Activated CD4-positive, alpha-beta memory T cell treated with anti-CD3 and anti-CD28 coated beads, Interleukin-2, amount 10 ng/mL, durations not matched to agents 7 days and 5 days (primary cell): ENCODE measurements at regions of chr6 and their contacts with region 1.

Region 1: DNA sequence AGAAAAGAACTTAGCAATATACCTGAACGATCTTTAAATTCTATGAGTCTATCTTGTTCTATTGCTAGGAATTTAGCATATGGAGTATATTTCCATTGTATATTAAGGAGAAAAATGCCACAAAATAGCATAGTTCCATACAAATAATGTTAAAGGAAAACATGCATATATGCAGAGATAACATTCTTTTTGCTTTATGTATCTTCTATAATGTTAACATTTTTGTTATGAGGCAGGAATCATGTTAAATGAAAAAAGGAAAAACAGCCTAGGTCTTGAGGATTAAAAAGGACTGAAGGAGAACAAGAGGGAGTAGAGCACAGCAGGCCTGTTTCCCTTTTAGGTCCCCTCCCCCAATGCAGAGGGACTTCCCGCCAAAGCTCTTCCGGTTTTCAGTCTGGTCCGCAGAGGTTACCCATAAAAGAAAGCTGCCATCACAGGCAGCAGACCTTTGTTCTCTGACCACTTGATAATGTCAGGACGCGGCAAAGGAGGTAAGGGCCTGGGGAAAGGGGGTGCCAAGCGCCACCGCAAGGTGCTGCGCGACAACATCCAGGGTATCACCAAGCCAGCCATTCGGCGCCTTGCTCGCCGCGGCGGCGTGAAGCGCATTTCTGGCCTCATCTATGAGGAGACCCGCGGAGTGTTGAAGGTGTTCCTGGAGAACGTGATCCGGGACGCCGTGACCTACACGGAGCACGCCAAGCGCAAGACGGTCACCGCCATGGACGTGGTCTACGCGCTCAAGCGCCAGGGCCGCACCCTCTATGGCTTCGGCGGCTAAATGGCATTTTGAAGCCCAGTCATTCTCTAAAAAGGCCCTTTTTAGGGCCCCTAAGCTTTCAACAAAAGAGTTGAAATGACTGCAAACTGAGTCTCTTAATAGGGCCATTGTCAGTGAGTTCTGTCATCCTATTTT is 108.4 kb upstream of the PRSS16 start:
- DNase-seq: peak; percentile 80
- H3K4me3 Mint-ChIP-seq: peak overlapping the region; percentile 91
- H3K27ac Mint-ChIP-seq: peak overlapping the region; percentile 98
- H3K4me1 Mint-ChIP-seq: peaks cover 67% of the 10 kb centered on the region
- H3K27me3 Mint-ChIP-seq: no peaks in the 10 kb centered on the region

Region 2: GRCh38 chr6:27076116-27076515 is 63.0 kb before region 1 on chr6:
- CTCF ChIA-PET with region 1: no interaction called
- POLR2A ChIA-PET with region 1: no interaction called
- DNase-seq: no peak
- H3K4me3 Mint-ChIP-seq: no peak overlapping the region
- H3K27ac Mint-ChIP-seq: no peak overlapping the region
- H3K4me1 Mint-ChIP-seq: peaks cover 2% of the 10 kb centered on the region
- H3K27me3 Mint-ChIP-seq: peaks cover 21% of the 10 kb centered on the region

Region 3: GRCh38 chr6:27260369-27260768 is 121.3 kb after region 1 on chr6:
- CTCF ChIA-PET with region 1: no interaction called
- POLR2A ChIA-PET with region 1: no interaction called
- DNase-seq: no peak
- H3K4me3 Mint-ChIP-seq: no peak overlapping the region
- H3K27ac Mint-ChIP-seq: no peak overlapping the region
- H3K4me1 Mint-ChIP-seq: no peaks in the 10 kb centered on the region
- H3K27me3 Mint-ChIP-seq: peaks cover 29% of the 10 kb centered on the region

Region 4: GRCh38 chr6:27825025-27825793 is 686.1 kb after region 1 on chr6:
- CTCF ChIA-PET with region 1: no interaction called
- POLR2A ChIA-PET with region 1: interaction called, 70 read pairs
- DNase-seq: no peak
- H3K4me3 Mint-ChIP-seq: peak overlapping the region; percentile 82
- H3K27ac Mint-ChIP-seq: peak overlapping the region; percentile 99
- H3K4me1 Mint-ChIP-seq: peaks cover 51% of the 10 kb centered on the region
- H3K27me3 Mint-ChIP-seq: no peaks in the 10 kb centered on the region

Region 5: DNA sequence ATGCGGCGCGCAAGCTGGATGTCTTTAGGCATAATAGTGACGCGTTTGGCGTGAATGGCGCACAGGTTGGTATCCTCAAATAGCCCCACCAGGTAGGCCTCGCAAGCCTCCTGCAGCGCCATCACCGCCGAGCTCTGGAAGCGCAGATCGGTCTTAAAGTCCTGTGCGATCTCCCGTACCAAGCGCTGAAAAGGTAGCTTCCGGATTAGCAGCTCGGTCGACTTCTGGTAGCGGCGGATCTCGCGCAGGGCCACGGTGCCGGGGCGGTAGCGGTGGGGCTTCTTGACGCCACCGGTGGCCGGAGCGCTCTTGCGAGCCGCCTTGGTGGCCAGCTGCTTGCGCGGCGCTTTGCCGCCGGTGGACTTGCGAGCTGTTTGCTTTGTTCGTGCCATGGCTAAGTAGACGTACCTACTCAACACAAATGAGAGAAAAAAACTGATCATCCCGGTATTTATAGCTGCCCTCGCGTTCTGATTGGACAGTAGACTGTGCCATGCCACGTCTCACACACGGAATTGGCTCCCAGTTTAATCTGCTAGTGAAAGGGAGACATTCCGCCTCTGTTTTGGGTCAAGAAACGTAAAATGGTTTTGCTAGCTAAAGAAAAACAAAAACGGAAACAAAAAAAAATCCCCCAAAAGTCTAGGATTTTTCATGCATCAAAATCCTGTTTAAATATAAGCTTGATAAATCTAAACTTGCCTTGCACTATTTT is 733.0 kb after region 1 on chr6:
- CTCF ChIA-PET with region 1: interaction called, 3 read pairs
- POLR2A ChIA-PET with region 1: interaction called, 236 read pairs
- DNase-seq: peak; percentile 87
- H3K4me3 Mint-ChIP-seq: peak overlapping the region; percentile 81
- H3K27ac Mint-ChIP-seq: peak overlapping the region; percentile 99
- H3K4me1 Mint-ChIP-seq: peaks cover 60% of the 10 kb centered on the region
- H3K27me3 Mint-ChIP-seq: no peaks in the 10 kb centered on the region